Dendritic cell treated with granulocyte-macrophage colony-stimulating factor and Interleukin-4, amounts not matched to agents 40 ng/mL and 50 ng/mL, for 4 days (primary cell): ENCODE measurements at regions of chr4 and their contacts with region 1.

Region 1: GRCh38 chr4:152850377-152850776 is 70.6 kb downstream of the ARFIP1 start:
- H3K4me3 Mint-ChIP-seq: no peak overlapping the region
- H3K27ac Mint-ChIP-seq: no peak overlapping the region
- H3K4me1 Mint-ChIP-seq: peaks cover 20% of the 10 kb centered on the region
- H3K27me3 Mint-ChIP-seq: no peaks in the 10 kb centered on the region

Region 2: DNA sequence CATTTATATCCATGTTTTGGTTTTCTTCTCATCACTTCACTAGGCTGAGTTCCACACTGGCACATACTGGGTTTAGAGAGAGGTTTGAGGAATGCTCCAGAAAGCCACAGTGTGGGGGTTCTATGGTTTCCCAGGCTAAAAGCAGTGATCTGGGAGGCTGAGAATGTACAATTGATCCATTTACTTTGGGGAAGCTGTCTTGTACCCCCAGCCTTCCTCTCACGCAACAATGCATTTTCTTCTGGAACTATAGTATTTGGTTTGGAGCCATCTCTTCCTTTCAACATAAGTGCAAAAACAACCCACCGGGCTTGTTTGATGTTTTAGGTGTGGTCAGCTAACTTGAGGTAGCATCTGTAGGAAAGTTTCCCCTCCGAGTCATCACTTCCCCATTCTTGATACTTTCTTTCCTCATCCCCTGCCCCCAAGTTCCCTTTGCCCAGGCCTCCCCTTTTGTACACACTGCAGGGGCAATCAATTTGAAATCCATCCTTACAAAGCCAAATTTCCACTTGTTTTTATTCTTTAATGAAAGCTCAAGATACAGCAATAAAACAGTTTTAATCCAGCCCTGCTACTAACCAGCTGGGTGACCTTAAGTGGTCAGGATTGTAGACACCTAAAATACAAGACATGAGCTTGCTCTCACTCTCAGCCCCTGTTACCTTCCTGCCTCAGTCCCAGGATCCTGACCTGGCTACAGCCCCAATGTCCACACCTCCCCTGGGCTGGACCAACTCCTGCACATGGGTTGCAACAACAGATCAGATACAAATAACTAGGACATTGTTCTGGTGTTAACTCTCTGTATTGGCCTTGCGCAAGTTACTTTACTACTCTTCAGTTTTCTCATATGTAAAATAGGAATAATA is 195.0 kb after region 1 on chr4:
- intact Hi-C with region 1: no loop called
- H3K4me3 Mint-ChIP-seq: no peak overlapping the region
- H3K27ac Mint-ChIP-seq: no peak overlapping the region
- H3K4me1 Mint-ChIP-seq: peaks cover 10% of the 10 kb centered on the region
- H3K27me3 Mint-ChIP-seq: no peaks in the 10 kb centered on the region

Region 3: GRCh38 chr4:153084980-153085630 is 234.7 kb after region 1 on chr4:
- intact Hi-C with region 1: loop called (anchors 1 kb)
- H3K4me3 Mint-ChIP-seq: no peak overlapping the region
- H3K27ac Mint-ChIP-seq: no peak overlapping the region
- H3K4me1 Mint-ChIP-seq: peaks cover 24% of the 10 kb centered on the region
- H3K27me3 Mint-ChIP-seq: peaks cover 14% of the 10 kb centered on the region

Region 4: GRCh38 chr4:153127760-153128494 is 277.6 kb after region 1 on chr4:
- intact Hi-C with region 1: loop called (anchors 1 kb)
- H3K4me3 Mint-ChIP-seq: no peak overlapping the region
- H3K27ac Mint-ChIP-seq: no peak overlapping the region
- H3K4me1 Mint-ChIP-seq: no peaks in the 10 kb centered on the region
- H3K27me3 Mint-ChIP-seq: peaks cover 10% of the 10 kb centered on the region